ENCODE measurements at regions of chr3 and their contacts with region 1.

Region 1: DNA sequence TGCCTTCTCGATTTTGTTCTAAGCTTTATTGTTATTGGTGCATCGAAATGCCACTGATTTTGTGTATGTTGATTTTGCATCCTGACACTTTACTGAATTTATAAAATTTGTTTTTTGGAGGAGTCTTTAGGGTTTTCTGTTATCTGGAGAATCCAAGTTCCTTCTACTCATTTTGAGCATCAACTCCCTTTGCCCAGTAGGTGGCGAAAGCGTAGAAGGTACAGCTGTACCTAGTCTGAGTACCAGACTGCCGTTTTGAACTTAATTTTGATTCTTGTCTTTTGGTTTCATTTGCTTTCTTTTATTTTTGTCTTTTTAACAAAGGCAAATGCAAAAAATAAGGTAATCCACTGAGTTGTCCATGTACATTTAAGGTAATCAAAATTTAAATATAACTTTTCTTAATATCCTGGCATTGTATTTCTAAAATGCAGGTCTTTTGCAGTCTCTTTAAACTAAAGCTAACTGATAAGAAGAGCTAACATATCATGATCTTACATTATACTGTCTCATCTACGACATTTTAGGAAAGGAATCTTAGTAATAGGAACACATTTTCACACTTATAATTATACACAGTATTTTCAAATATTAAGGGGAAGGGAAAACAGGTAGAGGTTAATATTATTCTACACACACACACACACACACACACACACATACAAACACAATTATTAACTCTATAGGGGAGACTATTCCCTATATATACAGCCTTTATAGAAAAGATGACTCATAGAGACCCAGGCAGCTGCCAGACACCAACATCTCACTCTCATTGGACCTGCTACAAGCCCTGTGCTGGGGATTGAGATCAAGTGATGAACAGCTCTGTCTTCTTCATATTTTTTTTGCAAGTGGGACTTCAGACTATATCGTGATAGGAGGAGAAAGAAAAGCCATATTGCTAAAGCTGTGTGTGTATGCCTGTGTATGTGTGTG is 71.7 kb downstream of the SYNPR start:
- DNase-seq: peak in 39 of 42 donors; percentile 21 to 84 (median 58)

Region 2: GRCh38 chr3:63643882-63644797 is 294.3 kb after region 1 on chr3:
- intact Hi-C with region 1: no loop called
- DNase-seq: no peak

Region 3: DNA sequence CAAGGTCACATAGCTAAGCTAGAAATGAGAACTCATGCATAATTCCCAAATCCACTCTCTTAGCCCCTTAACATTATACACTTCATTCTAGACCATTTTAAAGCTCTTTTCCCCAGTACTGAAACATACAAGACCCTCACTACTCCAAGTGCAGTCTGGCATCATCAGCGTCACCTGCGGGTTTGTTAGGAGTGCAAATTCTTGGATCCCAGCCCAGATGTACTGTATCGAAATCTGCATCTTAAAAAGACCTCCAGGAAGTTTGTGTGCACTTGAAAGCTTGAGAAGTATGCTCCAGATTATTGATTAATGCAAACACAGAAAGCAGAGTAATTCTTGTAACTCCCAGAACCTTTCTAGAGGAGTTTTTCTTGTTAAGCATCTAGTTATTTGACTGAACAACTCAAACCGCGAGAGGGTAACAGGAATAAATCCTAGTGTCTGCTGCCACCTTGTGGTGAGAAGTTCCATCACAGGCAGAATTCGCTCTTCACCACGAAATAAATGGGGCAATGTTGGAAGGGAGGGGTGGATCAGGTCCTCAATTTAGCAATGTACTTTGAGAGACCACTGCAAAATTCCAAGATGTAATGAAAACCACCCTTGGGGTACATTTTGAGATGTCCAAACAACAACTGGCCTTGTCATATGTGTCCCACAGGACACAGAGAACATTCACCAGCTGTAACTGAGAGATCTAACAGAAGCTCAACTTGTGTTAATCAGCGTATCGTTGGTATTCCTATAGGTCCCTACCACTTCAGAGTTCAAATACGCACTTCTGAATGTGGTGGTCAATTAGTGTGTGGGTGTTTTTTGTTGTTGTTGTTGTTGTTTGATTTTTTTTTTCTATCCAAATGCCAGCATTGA is 468.7 kb after region 1 on chr3:
- intact Hi-C with region 1: loop called (anchors 2 kb)
- DNase-seq: peak in 40 of 42 donors; percentile 23 to 92 (median 75)

Measured in head of caudate nucleus (tissue), 42 donors.